ENCODE measurements at regions of chr2 and their contacts with region 1.

Region 1: GRCh38 chr2:235766278-235766677 is 272.4 kb downstream of the AGAP1 start:
- DNase-seq: peak in 1 of 3 donors; percentile 92
- ATAC-seq: peak; percentile 96
- H3K4me3 ChIP-seq: no peak overlapping the region
- H3K4me1 ChIP-seq: no peaks in the 10 kb centered on the region
- CTCF ChIP-seq: peak; percentile 75

Region 2: GRCh38 chr2:236180831-236181453 is 414.7 kb after region 1 on chr2:
- intact Hi-C with region 1: loop called in 1 of 2 experiments (anchors 5 kb)
- DNase-seq: peak in 1 of 3 donors; percentile 74
- ATAC-seq: peak; percentile 35
- H3K4me3 ChIP-seq: no peak overlapping the region
- H3K4me1 ChIP-seq: peaks cover 12% of the 10 kb centered on the region
- CTCF ChIP-seq: peak; percentile 29